AG04449 (cell line): ENCODE measurements at regions of chr22 and their contacts with region 1.

Region 1: DNA sequence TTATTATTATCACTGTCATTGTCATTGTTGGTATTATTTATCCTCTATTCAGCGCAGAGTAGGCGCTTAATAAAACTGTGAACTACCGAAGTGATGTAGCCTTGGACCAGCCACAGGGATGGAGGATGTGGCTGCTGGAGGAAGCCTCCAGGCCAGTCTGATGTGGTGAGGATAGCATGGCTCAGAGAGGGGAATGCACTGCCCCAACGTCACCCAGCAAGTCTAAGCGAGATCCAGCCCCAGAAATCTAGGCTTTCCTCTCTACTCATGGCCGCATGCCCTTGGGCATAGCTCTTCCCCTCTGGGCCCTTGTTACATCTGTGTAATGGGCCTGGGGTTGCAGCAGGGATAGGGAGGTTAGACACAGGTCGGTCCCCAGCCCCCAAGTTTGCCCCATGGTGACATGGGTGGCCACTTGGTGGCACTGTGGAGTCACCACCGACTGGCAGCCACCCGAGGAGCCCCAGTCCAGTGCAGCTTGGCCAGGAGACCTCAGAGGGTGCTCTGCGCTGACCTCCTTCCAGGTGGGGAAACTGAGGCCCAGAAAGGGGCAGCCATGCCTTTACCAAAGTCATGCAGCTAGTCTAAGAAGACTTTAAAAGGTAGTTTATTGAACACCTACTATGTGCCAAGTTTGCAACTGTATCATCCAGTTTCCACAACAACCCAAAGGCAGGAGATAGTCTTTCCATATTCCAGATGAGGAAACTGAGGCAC is 395.7 kb downstream of the MN1 start:
- DNase-seq: no peak
- H3K4me3 ChIP-seq: no peak overlapping the region
- CTCF ChIP-seq: peak; percentile 85

Region 2: DNA sequence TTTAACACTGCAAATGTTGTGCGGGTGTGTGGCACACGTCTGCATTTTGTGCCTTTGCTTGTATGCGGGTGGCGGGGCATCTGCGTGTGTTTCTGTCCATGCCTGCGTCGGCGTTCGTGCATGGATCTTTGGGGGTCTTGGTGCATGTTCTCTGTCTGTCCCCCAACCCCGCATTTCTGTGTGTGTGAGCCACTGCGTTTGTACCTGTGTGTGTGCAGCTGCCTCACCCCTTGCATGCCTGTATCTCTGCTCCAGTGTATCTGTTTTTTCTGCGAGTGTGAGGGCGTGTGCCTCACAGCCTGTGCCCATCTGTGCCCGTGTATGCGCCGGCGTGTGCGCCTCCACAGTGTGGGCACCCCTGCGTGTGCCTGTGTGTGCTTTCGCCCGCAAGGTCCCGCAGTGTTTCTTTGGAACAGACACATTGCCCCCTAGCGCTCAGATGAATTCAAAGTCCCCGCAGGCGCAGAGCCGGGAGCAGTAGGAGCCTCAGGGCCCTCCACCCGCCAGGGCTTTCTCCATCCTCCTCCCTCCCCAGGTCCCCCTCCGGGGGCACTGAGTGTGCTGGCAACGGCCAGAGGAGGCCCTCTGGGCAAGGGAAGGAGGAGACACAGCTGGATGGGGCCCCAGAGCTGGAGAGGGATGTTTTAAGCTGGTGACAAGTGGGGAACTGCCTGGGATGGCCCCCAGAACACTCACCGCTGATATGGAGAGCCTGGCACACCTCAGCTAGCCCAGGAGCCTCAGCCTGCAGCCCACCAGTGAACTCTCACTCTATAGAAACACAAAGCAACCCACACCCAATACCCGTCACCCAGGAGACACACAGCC is 398.9 kb after region 1 on chr22:
- CTCF ChIA-PET with region 1: interaction called, 12 read pairs
- POLR2A ChIA-PET with region 1: no interaction called
- DNase-seq: no peak
- H3K4me3 ChIP-seq: peak overlapping the region; percentile 18; the same call in 1 of the 2 replicates
- CTCF ChIP-seq: peak; percentile 73